ENCODE measurements at regions of chr3 and their contacts with region 1.

Region 1: GRCh38 chr3:48556793-48557626 is at the start of gene PFKFB4:
- DNase-seq: peak; percentile 99
- ATAC-seq: peak; percentile 92 to 94 (median 93)
- H3K4me3 ChIP-seq: peak within 1 kb of the TSS; percentile 26 to 70 (median 58)
- H3K27ac ChIP-seq: peak within 1 kb of the TSS in 11 of 12 donors; percentile 19 to 92 (median 64)
- H3K4me1 ChIP-seq: peaks cover 5 to 83% (median 33%) of the 10 kb centered on the region in 12 donors
- H3K27me3 ChIP-seq: no peaks in the 10 kb centered on the region
- CTCF ChIP-seq: peak in 4 of 12 donors; percentile 11 to 34 (median 20)
- POLR2A ChIP-seq: peak in 1 of 2 donors; percentile 38
- total RNA-seq, gene PFKFB4: 0.44 to 9.1 (median 1.0) TPM

Region 2: DNA sequence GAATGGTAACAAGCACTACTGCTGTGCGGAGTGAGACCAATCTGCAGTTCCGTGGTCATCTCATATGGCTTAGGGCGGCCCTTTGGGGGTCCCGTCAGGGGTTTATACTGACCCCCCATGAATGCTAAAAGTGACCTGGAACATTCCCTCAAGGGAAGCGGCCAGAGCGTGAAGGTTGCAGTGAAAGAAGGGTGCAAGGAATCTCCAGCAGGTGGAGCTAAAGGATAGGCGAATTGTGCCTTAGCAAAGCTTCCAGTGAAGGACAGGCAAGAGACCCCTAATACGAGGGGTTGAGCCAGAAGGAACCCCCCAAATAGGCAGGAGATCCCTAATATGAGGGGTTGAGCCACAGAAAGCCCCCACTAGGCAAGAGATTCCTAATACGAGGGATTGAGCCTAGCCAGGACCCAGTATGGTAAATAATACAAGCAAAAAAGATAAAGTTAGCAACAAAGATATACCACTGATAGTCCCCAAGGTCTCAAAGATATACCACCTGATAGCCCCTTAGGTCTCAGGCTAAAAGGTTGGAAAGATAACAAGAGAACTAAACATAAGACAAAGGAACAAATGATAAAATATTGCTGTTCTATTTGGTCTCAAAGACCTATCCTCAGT is 283.3 kb before region 1 on chr3:
- intact Hi-C with region 1: loop called in 1 of 10 experiments (anchors 10 kb)
- DNase-seq: peak in 3 of 5 donors; percentile 30 to 47 (median 46)
- ATAC-seq: peak in 3 of 4 donors; percentile 65 to 69 (median 69)
- H3K4me3 ChIP-seq: no peak overlapping the region
- H3K27ac ChIP-seq: no peak overlapping the region
- H3K4me1 ChIP-seq: peaks cover 0 to 4% (median 0%) of the 10 kb centered on the region in 12 donors
- H3K27me3 ChIP-seq: no peaks in the 10 kb centered on the region
- CTCF ChIP-seq: peak; percentile 60 to 84 (median 74)
- POLR2A ChIP-seq: no peak

Region 3: GRCh38 chr3:48507351-48508061 is 49.5 kb before region 1 on chr3:
- intact Hi-C with region 1: loop called in 1 of 10 experiments (anchors 5 kb)
- DNase-seq: peak in 4 of 5 donors; percentile 40 to 45 (median 42)
- ATAC-seq: peak in 1 of 4 donors; percentile 38
- H3K4me3 ChIP-seq: no peak overlapping the region
- H3K27ac ChIP-seq: peak overlapping the region in 1 of 12 donors; percentile 2
- H3K4me1 ChIP-seq: peaks cover 6 to 31% (median 20%) of the 10 kb centered on the region in 12 donors
- H3K27me3 ChIP-seq: no peaks in the 10 kb centered on the region
- CTCF ChIP-seq: peak; percentile 33 to 63 (median 52)
- POLR2A ChIP-seq: no peak

Region 4: GRCh38 chr3:48601622-48601994 is 44.6 kb after region 1 on chr3:
- intact Hi-C with region 1: loop called in 7 of 10 experiments (anchors 5 kb)
- DNase-seq: peak; percentile 70 to 91 (median 79)
- ATAC-seq: peak; percentile 6 to 33 (median 28)
- H3K4me3 ChIP-seq: no peak overlapping the region
- H3K27ac ChIP-seq: peak overlapping the region in 10 of 12 donors; percentile 34 to 97 (median 82)
- H3K4me1 ChIP-seq: peaks cover 8 to 92% (median 48%) of the 10 kb centered on the region in 12 donors
- H3K27me3 ChIP-seq: no peaks in the 10 kb centered on the region
- CTCF ChIP-seq: no peak
- POLR2A ChIP-seq: no peak

Region 5: DNA sequence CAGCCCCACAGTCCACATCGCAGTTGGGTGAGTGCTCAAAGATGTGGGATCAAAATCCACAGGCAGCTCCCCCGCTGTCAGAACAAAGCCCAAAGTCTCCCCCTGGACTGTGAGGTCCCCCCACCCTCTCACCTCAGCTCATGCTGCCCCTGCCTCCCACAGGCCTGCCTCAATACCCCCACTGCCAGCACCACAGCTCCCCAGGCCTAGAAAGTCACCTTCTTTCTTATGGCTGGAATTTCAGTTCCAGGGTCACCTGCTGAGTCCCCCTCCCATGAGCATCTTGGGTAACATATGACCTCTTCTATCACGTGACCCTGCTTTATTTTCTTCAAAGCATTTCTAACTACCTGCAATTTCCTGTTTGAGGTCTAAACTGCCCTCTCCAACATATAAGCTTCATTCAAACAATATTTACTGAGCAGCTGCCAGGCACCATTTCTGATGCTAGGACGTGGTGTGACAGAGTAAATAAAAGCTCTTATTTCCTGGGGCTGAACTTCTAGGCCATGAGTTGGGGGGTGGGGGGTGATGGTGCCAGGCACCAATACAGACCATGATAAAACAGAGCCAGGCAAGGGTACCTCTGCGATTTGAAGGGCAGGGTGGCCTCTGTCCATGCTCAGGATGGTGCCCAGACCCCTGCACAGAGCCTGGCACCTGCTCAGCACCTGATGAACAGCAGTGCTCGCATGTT is 67.0 kb after region 1 on chr3:
- intact Hi-C with region 1: no loop called
- DNase-seq: no peak
- ATAC-seq: no peak
- H3K4me3 ChIP-seq: no peak overlapping the region
- H3K27ac ChIP-seq: no peak overlapping the region
- H3K4me1 ChIP-seq: no peaks in the 10 kb centered on the region
- H3K27me3 ChIP-seq: no peaks in the 10 kb centered on the region
- CTCF ChIP-seq: no peak
- POLR2A ChIP-seq: no peak

Region 6: DNA sequence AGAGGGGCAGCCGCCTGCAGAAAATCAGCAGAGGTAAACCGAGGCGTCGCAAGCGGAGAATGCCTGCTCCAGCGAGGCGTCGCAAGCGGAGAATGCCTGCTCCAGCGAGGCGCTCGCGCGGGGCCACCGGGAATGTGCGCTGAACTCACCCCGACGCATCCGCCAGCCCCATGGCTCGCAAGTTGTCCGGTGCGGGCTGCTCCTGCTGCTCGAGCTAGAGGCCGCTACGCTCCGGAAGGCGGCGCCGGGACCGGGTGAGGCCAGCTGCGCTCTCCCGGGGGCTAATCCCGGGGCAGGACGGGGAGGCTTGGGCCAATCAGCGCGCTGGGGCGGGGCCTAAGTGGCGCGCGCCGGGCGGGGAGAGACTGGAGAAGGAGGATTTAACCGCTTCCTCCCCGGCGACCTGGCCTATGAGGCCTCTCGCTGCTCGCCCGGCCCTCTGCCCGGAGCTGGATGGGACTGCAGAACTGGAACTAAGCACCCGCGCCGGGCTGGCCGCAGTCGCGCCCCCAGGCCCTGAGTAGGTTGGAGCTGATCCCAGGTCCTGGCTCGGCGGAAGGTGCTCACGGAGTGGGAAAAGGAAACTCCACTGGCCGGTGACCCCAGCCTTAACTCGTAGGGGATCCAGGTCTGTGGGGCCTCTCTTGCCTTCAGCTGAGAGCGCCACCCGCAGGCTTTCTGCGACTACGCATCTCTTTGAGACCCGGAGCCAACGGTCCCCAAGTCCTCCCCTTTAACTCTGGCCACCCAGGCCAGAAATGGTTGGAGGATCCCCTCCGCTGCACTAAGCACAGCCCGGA is 78.4 kb after region 1 on chr3 and contains the start of gene SLC26A6:
- intact Hi-C with region 1: loop called in 1 of 10 experiments (anchors 2 kb)
- DNase-seq: peak; percentile 97 to 99 (median 98)
- ATAC-seq: peak; percentile 98 to 99 (median 98)
- H3K4me3 ChIP-seq: peak within 1 kb of the TSS; percentile 64 to 96 (median 86)
- H3K27ac ChIP-seq: peak within 1 kb of the TSS; percentile 28 to 90 (median 86)
- H3K4me1 ChIP-seq: peaks cover 0 to 28% (median 19%) of the 10 kb centered on the region in 12 donors
- H3K27me3 ChIP-seq: no peaks in the 10 kb centered on the region
- CTCF ChIP-seq: peak in 10 of 12 donors; percentile 5 to 67 (median 45)
- POLR2A ChIP-seq: peak in 1 of 2 donors; percentile 62
- total RNA-seq, gene SLC26A6: 6.7 to 14.6 (median 9.2) TPM

Measured in heart left ventricle (tissue), 16 donors.